ENCODE measurements at regions of chr5 and their contacts with region 1.

Region 1: DNA sequence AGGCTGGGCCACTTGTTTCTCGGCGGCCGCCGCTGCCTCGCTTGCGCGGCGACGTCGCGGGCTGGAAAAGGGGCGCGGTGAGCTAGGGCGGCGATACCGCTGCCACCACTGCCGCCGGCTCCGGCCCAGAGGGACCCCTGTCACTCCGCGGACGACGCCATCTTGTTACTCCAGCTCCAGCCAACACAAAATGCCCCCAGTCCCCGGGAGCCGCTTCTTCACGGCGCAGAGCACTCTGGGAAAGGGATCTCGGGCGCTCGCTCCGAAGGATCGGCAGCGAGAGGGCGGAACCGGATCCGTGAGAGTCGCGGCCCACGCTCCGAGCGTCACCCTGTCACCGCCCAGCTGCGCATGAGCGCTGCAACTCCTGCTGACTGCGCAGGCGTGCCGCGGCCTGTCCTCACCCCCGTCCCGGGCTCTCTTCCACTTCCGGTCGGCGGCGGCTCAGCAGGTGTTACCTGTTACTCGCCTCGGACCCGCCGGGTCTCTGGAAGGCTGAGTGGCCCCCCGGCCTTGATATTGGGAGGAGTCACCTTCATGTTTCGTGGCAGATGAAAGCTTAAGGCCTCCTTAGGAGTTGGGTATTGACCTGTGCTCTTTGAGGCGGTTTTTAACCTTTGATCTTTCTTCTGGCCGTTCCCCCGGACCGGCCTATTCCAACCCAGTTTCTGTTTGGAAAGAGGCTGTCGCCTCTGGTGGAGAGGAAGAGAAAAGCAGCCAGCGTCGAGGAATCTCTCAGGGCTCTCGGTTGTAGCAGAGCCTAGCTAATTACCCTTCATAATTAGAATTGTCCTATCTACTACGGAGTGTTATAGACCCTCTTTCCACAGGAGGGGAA is at the start of gene CSNK1A1:
- DNase-seq: peak; percentile 99
- ATAC-seq: peak; percentile 97 to 98
- total RNA-seq, gene CSNK1A1: 212 to 342 TPM

Region 2: DNA sequence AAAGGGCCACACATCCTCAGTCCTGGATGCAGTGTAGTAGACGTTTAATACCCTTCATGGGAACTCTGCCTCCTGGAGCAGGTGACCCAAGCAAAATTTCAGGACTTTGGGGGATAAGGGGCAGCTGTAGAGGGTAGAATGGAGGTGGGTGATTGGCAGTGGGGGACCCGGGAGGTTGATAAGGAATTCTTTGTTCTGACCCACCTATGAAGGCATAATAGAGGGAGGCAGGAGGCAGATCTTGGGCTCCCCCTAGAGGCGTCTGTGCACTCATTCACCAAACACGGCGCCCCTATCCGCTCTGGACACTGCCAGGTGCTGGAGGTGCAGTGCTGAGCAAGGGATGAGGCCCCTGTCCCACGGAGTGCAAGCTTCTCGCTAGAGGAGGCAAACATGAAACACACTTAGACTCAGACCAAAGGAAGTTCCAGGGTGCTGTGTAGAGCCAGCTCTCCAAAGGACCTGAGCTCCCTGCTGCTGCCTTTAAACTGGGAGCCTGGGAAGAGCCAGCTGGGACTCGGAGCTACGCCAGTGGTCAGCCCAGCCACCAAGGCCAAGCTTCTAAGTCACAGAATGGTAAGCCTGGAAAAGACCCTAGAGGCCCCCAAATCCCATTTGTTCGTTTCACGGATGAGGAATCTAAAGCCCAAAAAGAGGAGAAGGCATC is 180.0 kb before region 1 on chr5:
- intact Hi-C with region 1: no loop called
- DNase-seq: peak; percentile 67
- ATAC-seq: peak; percentile 76 to 85

Region 3: DNA sequence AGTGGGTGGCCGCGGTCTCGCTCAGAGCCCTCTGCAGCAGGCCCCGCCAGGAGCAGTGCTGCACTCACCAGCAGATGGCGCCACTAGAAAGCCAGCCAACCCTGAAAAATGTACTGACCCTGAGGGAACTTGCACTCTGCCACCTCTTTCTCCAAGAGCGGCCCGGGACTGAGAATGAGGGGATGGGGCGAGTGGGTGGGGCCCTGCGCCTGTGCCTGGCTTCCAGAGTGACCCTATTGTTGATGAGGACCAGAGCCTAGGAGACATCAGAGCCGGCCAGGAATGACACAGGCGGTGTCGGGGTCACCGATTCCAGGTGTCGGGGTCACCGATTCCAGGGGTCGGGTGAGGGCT is 169.5 kb before region 1 on chr5:
- intact Hi-C with region 1: loop called in 1 of 2 experiments (anchors 5 kb)
- DNase-seq: peak; percentile 84
- ATAC-seq: peak; percentile 76 to 78

Region 4: GRCh38 chr5:149448831-149449714 is 102.3 kb before region 1 on chr5:
- intact Hi-C with region 1: loop called in 1 of 2 experiments (anchors 5 kb)
- DNase-seq: no peak
- ATAC-seq: no peak

Region 5: GRCh38 chr5:149466457-149466972 is 84.9 kb before region 1 on chr5:
- intact Hi-C with region 1: no loop called
- DNase-seq: peak; percentile 57
- ATAC-seq: peak; percentile 35 to 58

Region 6: GRCh38 chr5:149485655-149486425 is 65.6 kb before region 1 on chr5:
- intact Hi-C with region 1: loop called in 1 of 2 experiments (anchors 10 kb)
- DNase-seq: peak; percentile 88
- ATAC-seq: peak; percentile 80 to 90

Region 7: GRCh38 chr5:149711338-149711737 is 159.9 kb after region 1 on chr5:
- intact Hi-C with region 1: no loop called
- DNase-seq: no peak
- ATAC-seq: peak; percentile 30 to 47